A549 (cell line): ENCODE measurements at regions of chr10 and their contacts with region 1.

Region 1: DNA sequence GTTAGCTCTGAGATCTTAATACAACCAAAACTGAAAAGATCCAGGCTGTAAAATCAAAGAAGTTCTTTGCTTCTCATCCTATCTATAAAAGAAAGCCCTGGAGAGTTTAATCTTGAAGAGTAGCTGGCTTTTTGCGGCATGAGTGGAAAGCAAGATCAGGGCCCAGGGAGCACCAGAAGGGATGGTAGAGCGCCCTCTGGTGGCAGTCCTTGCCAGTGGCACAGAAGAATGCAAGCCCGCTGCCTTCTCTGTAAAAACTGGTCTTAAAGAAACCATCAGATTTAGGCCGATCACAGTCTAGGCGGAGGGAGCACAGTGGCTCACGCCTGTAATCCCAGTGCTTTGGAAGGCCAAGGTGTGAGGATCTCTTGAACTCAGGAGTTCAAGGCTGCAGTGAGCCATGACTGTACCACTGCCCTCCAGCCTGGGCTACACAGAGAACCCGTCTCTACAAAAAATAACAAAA is 35.6 kb downstream of the CPN1 start:
- DNase-seq: peak; percentile 67 to 86
- ATAC-seq: peak; percentile 94
- H3K4me3 ChIP-seq: no peak overlapping the region
- H3K27ac ChIP-seq: peak overlapping the region; percentile 25 to 78; a peak in 5 of 6 replicates
- H3K4me1 ChIP-seq: peaks cover 26% of the 10 kb centered on the region
- CTCF ChIP-seq: peak; percentile 97
- EP300 ChIP-seq: 0 out of 5 replicates have a peak, but pooled peaks of 1 of the 2 experiments have one; percentile 4
- POLR2A ChIP-seq: no peak
- RAD21 ChIP-seq: peak; percentile 94 to 96

Region 2: DNA sequence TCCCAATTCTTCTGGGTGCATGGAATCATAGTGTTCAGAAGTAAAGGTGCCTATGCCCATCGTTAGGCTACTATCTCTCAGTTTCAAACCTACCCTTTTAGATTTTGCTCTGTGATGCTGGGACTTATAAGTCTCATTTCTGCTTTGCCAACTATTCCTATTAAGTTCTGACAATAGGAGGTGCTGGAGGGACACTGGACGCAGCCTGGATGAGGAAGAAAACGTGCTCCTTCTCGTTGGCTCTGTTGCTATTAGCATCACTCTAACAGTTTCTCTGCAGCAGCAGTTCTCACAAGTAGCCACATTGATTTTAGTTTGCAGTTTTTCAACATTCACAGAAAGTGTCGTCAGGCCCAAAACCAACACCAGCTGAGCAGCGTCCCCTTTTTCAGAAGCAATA is 191.2 kb before region 1 on chr10:
- CTCF ChIA-PET with region 1: interaction called, 139 read pairs
- POLR2A ChIA-PET with region 1: interaction called, 3 read pairs
- DNase-seq: peak; percentile 41 to 81
- ATAC-seq: peak; percentile 38 to 43; a peak in 4 of 6 replicates
- H3K4me3 ChIP-seq: no peak overlapping the region
- H3K27ac ChIP-seq: no peak overlapping the region
- H3K4me1 ChIP-seq: peaks cover 20% of the 10 kb centered on the region
- CTCF ChIP-seq: peak; percentile 46
- EP300 ChIP-seq: no peak
- POLR2A ChIP-seq: no peak
- RAD21 ChIP-seq: peak; percentile 57 to 73

Region 3: GRCh38 chr10:99906470-99906869 is 139.6 kb before region 1 on chr10:
- CTCF ChIA-PET with region 1: interaction called, 102 read pairs
- POLR2A ChIA-PET with region 1: no interaction called
- DNase-seq: peak; percentile 79 to 88
- ATAC-seq: peak; percentile 89 to 97
- H3K4me3 ChIP-seq: no peak overlapping the region
- H3K27ac ChIP-seq: peak overlapping the region; percentile 46 to 59
- H3K4me1 ChIP-seq: peaks cover 21% of the 10 kb centered on the region
- CTCF ChIP-seq: peak; percentile 50
- EP300 ChIP-seq: no peak
- POLR2A ChIP-seq: no peak
- RAD21 ChIP-seq: peak; percentile 69 to 87

Region 4: GRCh38 chr10:99966306-99966705 is 79.7 kb before region 1 on chr10:
- CTCF ChIA-PET with region 1: interaction called, 19 read pairs
- POLR2A ChIA-PET with region 1: interaction called, 4 read pairs
- DNase-seq: peak; percentile 64 to 72
- ATAC-seq: peak; percentile 90 to 91
- H3K4me3 ChIP-seq: no peak overlapping the region
- H3K27ac ChIP-seq: peak overlapping the region; percentile 62 to 84
- H3K4me1 ChIP-seq: peaks cover 47% of the 10 kb centered on the region
- CTCF ChIP-seq: no peak
- EP300 ChIP-seq: peak; percentile 39 to 62; a peak in 2 of 5 replicates
- POLR2A ChIP-seq: no peak
- RAD21 ChIP-seq: peak; percentile 14 to 25; a peak in 1 of 5 replicates

Region 5: GRCh38 chr10:100025576-100025975 is 20.5 kb before region 1 on chr10:
- CTCF ChIA-PET with region 1: interaction called, 36 read pairs
- POLR2A ChIA-PET with region 1: no interaction called
- DNase-seq: no peak
- ATAC-seq: peak in 1 of 2 experiments; percentile 19; a peak in 2 of 6 replicates
- H3K4me3 ChIP-seq: no peak overlapping the region
- H3K27ac ChIP-seq: peak overlapping the region in 1 of 2 experiments; percentile 32; a peak in 1 of 6 replicates
- H3K4me1 ChIP-seq: peaks cover 34% of the 10 kb centered on the region
- CTCF ChIP-seq: no peak
- EP300 ChIP-seq: no peak
- POLR2A ChIP-seq: no peak
- RAD21 ChIP-seq: no peak